ENCODE measurements at regions of chr3 and their contacts with region 1.

Region 1: GRCh38 chr3:71064288-71064955 is 519.1 kb downstream of the FOXP1 start:
- DNase-seq: peak; percentile 79
- ATAC-seq: peak; percentile 11
- H3K4me3 Mint-ChIP-seq: no peak overlapping the region
- H3K27ac Mint-ChIP-seq: no peak overlapping the region
- H3K4me1 Mint-ChIP-seq: peaks cover 63% of the 10 kb centered on the region
- H3K27me3 Mint-ChIP-seq: no peaks in the 10 kb centered on the region

Region 2: GRCh38 chr3:69200384-69201068 is 1863.9 kb before region 1 on chr3:
- CTCF ChIA-PET with region 1: no interaction called
- POLR2A ChIA-PET with region 1: no interaction called
- intact Hi-C with region 1: loop called in 1 of 2 experiments (anchors 10 kb)
- DNase-seq: peak; percentile 80
- ATAC-seq: peak; percentile 44
- H3K4me3 Mint-ChIP-seq: peak overlapping the region; percentile 74
- H3K27ac Mint-ChIP-seq: peak overlapping the region; percentile 91
- H3K4me1 Mint-ChIP-seq: peaks cover 66% of the 10 kb centered on the region
- H3K27me3 Mint-ChIP-seq: peaks cover 3% of the 10 kb centered on the region

Region 3: GRCh38 chr3:71006810-71007785 is 57.3 kb before region 1 on chr3:
- CTCF ChIA-PET with region 1: interaction called, 7 read pairs
- POLR2A ChIA-PET with region 1: interaction called, 10 read pairs
- intact Hi-C with region 1: loop called (anchors 1 kb)
- DNase-seq: no peak
- ATAC-seq: no peak
- H3K4me3 Mint-ChIP-seq: no peak overlapping the region
- H3K27ac Mint-ChIP-seq: peak overlapping the region; percentile 79
- H3K4me1 Mint-ChIP-seq: peaks cover 79% of the 10 kb centered on the region
- H3K27me3 Mint-ChIP-seq: no peaks in the 10 kb centered on the region

Region 4: DNA sequence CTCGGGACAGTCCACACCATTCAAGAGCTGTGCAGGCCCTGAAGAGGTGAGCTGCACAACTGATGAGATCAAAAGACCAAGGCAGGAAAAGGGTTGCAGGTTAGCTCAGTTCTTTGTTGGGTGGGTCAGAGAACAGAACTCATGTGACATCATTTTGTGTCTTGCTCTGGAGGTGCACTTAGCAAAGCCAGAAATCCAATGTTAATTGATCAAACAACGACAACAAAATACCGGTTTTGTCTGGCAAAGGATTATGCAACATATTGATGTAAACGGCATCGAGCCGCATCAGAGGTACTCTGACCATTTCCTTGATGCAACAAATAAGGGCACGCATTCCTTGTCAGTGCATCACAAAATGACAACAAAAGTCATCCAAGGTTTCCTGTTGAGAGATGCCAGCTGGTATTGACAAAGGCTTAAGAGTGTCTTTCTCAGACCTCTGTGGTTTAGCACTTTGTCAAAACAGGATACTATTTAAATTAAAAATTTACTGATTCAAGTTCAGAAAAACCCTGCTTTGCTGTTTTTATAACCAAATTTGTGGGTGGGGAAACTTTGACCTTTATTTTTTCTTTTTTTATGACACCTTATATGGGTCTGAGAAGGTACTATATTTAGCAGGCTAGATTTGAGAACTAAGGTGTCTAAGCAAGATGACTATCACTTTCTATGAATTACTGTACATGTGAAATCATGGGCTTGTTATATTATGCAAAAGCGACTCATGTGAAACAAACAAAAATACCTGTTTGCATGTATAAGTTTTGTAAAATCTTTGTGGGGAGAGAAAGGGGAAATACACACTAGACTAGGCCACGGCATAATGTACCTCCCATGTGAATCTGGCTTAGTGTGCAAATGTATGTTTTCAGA is 23.0 kb after region 1 on chr3:
- CTCF ChIA-PET with region 1: interaction called, 5 read pairs
- POLR2A ChIA-PET with region 1: interaction called, 7 read pairs
- intact Hi-C with region 1: loop called (anchors 1 kb)
- DNase-seq: peak; percentile 61
- ATAC-seq: peak; percentile 74
- H3K4me3 Mint-ChIP-seq: peak overlapping the region; percentile 52
- H3K27ac Mint-ChIP-seq: peak overlapping the region; percentile 93
- H3K4me1 Mint-ChIP-seq: peaks cover 94% of the 10 kb centered on the region
- H3K27me3 Mint-ChIP-seq: no peaks in the 10 kb centered on the region

Region 5: DNA sequence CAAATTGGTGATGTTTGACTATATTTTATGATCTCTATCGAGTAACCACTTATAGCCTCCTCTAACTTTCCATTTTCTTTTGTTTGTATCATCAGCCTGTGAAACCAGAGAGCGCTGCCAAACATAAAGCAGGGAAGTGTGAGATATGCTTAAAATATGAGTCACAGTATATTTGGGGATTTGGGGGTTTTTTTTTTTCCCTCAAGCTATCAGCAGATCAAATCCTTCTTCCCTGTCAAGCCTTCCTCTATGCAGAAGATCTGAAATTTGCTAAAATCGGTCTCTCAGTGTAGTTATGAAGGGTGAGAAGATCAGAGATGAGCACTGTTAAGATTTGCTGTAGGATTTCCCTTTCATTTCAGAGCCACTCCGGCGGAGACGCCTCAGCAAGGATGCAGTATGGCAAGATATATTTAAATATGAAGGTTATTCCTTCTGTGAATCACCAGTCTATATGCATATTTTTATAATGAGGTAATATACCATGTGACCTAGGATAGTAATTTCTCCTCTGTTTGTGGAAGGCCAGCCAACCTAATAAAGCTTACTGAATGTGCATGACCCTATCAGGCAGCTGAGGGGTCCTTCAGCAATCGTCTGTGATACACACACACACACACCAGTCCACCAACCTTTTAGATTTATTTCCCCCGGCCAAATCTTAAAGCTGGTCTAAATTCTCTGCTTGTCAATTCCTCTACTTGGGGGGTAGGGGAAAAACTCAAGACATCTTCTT is 45.0 kb after region 1 on chr3:
- CTCF ChIA-PET with region 1: no interaction called
- POLR2A ChIA-PET with region 1: no interaction called
- intact Hi-C with region 1: no loop called
- DNase-seq: peak; percentile 44
- ATAC-seq: peak; percentile 49
- H3K4me3 Mint-ChIP-seq: peak overlapping the region; percentile 7
- H3K27ac Mint-ChIP-seq: peak overlapping the region; percentile 71
- H3K4me1 Mint-ChIP-seq: peaks cover 95% of the 10 kb centered on the region
- H3K27me3 Mint-ChIP-seq: no peaks in the 10 kb centered on the region

Region 6: DNA sequence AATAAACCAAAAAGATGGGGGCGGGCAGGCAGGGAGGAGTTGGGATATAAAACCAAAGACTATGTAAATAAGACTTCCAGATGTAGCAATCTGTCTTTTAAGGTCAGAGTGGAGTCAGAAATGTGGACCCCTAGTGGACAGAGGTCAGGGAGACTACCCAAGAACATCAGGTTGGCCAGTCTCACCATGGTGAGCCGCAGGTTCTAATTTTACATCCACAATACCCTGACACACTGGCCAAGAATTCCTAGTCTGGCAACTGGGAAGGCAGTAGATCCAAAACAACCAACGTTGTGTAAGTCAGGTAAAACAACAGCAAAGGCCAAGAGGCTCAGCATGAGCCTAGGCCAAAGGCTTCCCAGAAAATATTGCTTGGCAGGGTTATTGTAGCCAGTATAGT is 315.7 kb after region 1 on chr3:
- CTCF ChIA-PET with region 1: no interaction called
- POLR2A ChIA-PET with region 1: no interaction called
- intact Hi-C with region 1: loop called in 1 of 2 experiments (anchors 5 kb)
- DNase-seq: no peak
- ATAC-seq: no peak
- H3K4me3 Mint-ChIP-seq: no peak overlapping the region
- H3K27ac Mint-ChIP-seq: peak overlapping the region; percentile 7
- H3K4me1 Mint-ChIP-seq: peaks cover 91% of the 10 kb centered on the region
- H3K27me3 Mint-ChIP-seq: no peaks in the 10 kb centered on the region

Region 7: GRCh38 chr3:71478568-71478967 is 414.1 kb after region 1 on chr3:
- CTCF ChIA-PET with region 1: no interaction called
- POLR2A ChIA-PET with region 1: no interaction called
- intact Hi-C with region 1: loop called in 1 of 2 experiments (anchors 5 kb)
- DNase-seq: peak; percentile 89
- ATAC-seq: peak; percentile 98
- H3K4me3 Mint-ChIP-seq: peak overlapping the region; percentile 19
- H3K27ac Mint-ChIP-seq: peak overlapping the region; percentile 93
- H3K4me1 Mint-ChIP-seq: peaks cover 78% of the 10 kb centered on the region
- H3K27me3 Mint-ChIP-seq: no peaks in the 10 kb centered on the region

Region 8: GRCh38 chr3:71629711-71630110 is 565.3 kb after region 1 on chr3:
- CTCF ChIA-PET with region 1: no interaction called
- POLR2A ChIA-PET with region 1: no interaction called
- intact Hi-C with region 1: no loop called
- DNase-seq: no peak
- ATAC-seq: no peak
- H3K4me3 Mint-ChIP-seq: no peak overlapping the region
- H3K27ac Mint-ChIP-seq: no peak overlapping the region
- H3K4me1 Mint-ChIP-seq: no peaks in the 10 kb centered on the region
- H3K27me3 Mint-ChIP-seq: no peaks in the 10 kb centered on the region

Region 9: GRCh38 chr3:71984843-71985613 is 920.6 kb after region 1 on chr3:
- CTCF ChIA-PET with region 1: no interaction called
- POLR2A ChIA-PET with region 1: no interaction called
- intact Hi-C with region 1: no loop called
- DNase-seq: peak; percentile 69
- ATAC-seq: peak; percentile 84
- H3K4me3 Mint-ChIP-seq: peak overlapping the region; percentile 1
- H3K27ac Mint-ChIP-seq: peak overlapping the region; percentile 64
- H3K4me1 Mint-ChIP-seq: peaks cover 47% of the 10 kb centered on the region
- H3K27me3 Mint-ChIP-seq: peaks cover 4% of the 10 kb centered on the region

Measured in activated CD4-positive, alpha-beta T cell treated with anti-CD3 and anti-CD28 coated beads for 36 hours (primary cell).